ENCODE measurements at regions of chr12 and their contacts with region 1.

Region 1: GRCh38 chr12:113230315-113231234 is 9.3 kb downstream of the TPCN1 start:
- DNase-seq: no peak
- H3K4me3 ChIP-seq: no peak overlapping the region
- H3K27ac ChIP-seq: peak overlapping the region; percentile 76
- H3K4me1 ChIP-seq: peaks cover 21% of the 10 kb centered on the region
- H3K27me3 ChIP-seq: no peaks in the 10 kb centered on the region
- CTCF ChIP-seq: no peak

Region 2: DNA sequence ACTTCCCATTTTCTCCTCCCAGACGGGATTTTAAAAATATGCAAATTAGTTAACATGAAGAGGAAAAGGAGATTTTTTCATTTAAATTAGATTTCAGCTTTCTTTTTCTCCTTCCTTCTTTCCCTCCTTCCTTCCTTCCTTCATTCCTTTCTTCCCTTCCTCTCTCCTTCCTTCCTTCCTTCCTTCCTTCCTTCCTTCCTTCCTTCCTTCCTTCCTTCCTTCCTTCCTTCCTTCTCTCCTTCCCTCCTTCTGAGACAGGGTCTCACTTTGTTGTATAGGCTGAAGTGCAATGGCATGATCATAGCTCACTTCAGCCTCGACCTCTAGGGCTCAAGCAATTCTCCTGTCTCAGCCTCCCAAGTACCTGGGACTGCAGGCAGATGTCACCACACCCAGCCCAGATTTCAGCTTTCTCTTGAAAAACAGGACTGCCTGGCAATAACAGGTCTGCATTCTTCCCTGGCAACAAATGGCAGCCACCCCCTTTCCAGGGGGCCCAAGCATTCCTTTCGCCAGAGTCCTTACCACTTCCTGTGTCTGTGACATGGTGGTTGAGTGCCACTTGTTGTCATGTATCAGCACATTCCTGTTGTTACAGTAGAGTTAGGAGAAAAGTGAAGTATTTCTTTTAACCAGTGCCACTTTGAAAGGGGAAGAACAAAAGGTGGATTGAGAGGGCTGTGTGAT is 692.7 kb before region 1 on chr12:
- CTCF ChIA-PET with region 1: interaction called, 10 read pairs
- POLR2A ChIA-PET with region 1: no interaction called
- intact Hi-C with region 1: no loop called
- DNase-seq: peak; percentile 76 to 81
- H3K4me3 ChIP-seq: no peak overlapping the region
- H3K27ac ChIP-seq: no peak overlapping the region
- H3K4me1 ChIP-seq: 0 out of 2 replicates have a peak, but pooled peaks cover 4% of the 10 kb centered on the region
- H3K27me3 ChIP-seq: no peaks in the 10 kb centered on the region; the same call in 1 of the 2 replicates
- CTCF ChIP-seq: no peak

Region 3: GRCh38 chr12:113241191-113242025 is 10.8 kb after region 1 on chr12:
- CTCF ChIA-PET with region 1: interaction called, 3 read pairs
- POLR2A ChIA-PET with region 1: no interaction called
- intact Hi-C with region 1: loop called (anchors 1 kb)
- DNase-seq: peak; percentile 60 to 99
- H3K4me3 ChIP-seq: peak overlapping the region; percentile 36; the same call in 1 of the 2 replicates
- H3K27ac ChIP-seq: peak overlapping the region; percentile 93
- H3K4me1 ChIP-seq: peaks cover 86% of the 10 kb centered on the region
- H3K27me3 ChIP-seq: no peaks in the 10 kb centered on the region
- CTCF ChIP-seq: no peak

Region 4: GRCh38 chr12:113247123-113248055 is 16.8 kb after region 1 on chr12:
- CTCF ChIA-PET with region 1: interaction called, 3 read pairs
- POLR2A ChIA-PET with region 1: interaction called, 6 read pairs
- intact Hi-C with region 1: loop called (anchors 1 kb)
- DNase-seq: peak in 1 of 2 experiments; percentile 38
- H3K4me3 ChIP-seq: no peak overlapping the region
- H3K27ac ChIP-seq: peak overlapping the region; percentile 83
- H3K4me1 ChIP-seq: peaks cover 50% of the 10 kb centered on the region
- H3K27me3 ChIP-seq: no peaks in the 10 kb centered on the region
- CTCF ChIP-seq: no peak

Region 5: GRCh38 chr12:113445544-113446171 is 215.1 kb after region 1 on chr12:
- CTCF ChIA-PET with region 1: no interaction called
- POLR2A ChIA-PET with region 1: no interaction called
- intact Hi-C with region 1: no loop called
- DNase-seq: no peak
- H3K4me3 ChIP-seq: no peak overlapping the region
- H3K27ac ChIP-seq: no peak overlapping the region
- H3K4me1 ChIP-seq: no peaks in the 10 kb centered on the region
- H3K27me3 ChIP-seq: 0 out of 2 replicates have a peak, but pooled peaks cover 6% of the 10 kb centered on the region
- CTCF ChIP-seq: no peak